ENCODE measurements at regions of chr9 and their contacts with region 1.

Region 1: DNA sequence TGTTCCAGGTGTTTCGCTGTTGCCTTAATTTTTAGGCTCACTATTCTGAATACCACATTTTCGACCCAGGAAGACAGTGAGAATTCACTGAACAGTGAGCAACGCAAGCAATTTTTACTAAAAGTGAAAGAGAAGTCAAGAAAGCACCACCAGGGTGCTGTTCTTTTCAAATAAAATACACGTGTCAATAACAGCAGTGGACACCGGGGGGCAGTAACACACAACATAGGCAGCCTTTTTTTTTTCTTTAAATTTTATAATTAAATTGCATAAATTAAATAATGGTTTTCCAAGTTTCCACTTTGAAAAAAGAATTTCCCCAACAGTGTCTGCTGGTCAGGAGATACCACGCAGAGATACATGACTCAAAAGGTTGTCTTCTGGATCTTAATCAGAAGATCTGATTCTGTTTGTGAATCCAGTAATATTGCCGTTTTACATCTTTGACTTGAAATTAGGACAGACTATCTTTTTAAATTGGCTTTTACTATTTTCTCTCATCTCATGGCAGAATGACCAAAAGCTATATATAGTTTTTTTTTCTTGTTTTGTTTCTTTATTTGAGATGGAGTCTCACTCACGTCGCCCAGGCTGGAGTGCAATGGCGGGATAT is 47.1 kb upstream of the SH3GL2 start:
- DNase-seq: peak; percentile 52
- ATAC-seq: peak; percentile 65
- H3K4me3 Mint-ChIP-seq: no peak overlapping the region
- H3K27ac Mint-ChIP-seq: no peak overlapping the region
- H3K4me1 Mint-ChIP-seq: peaks cover 7% of the 10 kb centered on the region
- H3K27me3 Mint-ChIP-seq: no peaks in the 10 kb centered on the region
- CTCF ChIP-seq: peak; percentile 78

Region 2: GRCh38 chr9:17802249-17802857 is 270.6 kb after region 1 on chr9:
- CTCF ChIA-PET with region 1: interaction called, 11 read pairs
- POLR2A ChIA-PET with region 1: no interaction called
- DNase-seq: no peak
- ATAC-seq: peak; percentile 46; the same call in 1 of the 2 replicates
- H3K4me3 Mint-ChIP-seq: no peak overlapping the region
- H3K27ac Mint-ChIP-seq: no peak overlapping the region
- H3K4me1 Mint-ChIP-seq: peaks cover 5% of the 10 kb centered on the region; the same call in 1 of the 2 replicates
- H3K27me3 Mint-ChIP-seq: no peaks in the 10 kb centered on the region
- CTCF ChIP-seq: no peak

Region 3: GRCh38 chr9:17847908-17848307 is 316.2 kb after region 1 on chr9:
- CTCF ChIA-PET with region 1: no interaction called
- POLR2A ChIA-PET with region 1: no interaction called
- DNase-seq: no peak
- ATAC-seq: no peak
- H3K4me3 Mint-ChIP-seq: no peak overlapping the region
- H3K27ac Mint-ChIP-seq: no peak overlapping the region
- H3K4me1 Mint-ChIP-seq: peaks cover 13% of the 10 kb centered on the region
- H3K27me3 Mint-ChIP-seq: peaks cover 3% of the 10 kb centered on the region
- CTCF ChIP-seq: no peak

Region 4: DNA sequence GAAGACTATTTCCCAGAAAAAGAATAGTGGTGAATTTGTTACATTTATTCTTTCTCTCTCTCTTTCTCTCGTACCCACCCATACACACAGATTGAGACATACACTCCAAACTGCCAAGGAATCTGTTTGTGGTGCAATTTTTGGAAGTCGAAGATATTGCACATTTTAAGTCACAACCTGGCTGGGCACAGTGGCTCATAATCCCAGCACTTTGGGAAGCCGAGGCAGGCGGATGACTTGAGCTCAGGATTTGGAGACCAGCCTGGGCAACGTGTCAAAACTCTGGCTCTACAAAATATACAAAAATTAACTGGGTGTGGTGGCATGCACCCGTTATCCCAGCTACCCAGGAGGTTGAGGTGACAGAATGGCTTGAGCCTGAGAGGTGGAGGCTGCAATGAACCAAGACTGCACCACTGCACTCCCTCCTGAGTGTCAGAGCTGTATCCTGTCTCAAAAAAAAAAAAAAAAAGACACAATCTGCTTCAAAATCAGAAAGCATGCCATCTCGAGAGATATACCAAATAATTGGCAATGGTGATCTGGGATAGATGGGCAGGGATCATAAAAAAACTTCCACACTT is 1614.8 kb after region 1 on chr9:
- CTCF ChIA-PET with region 1: no interaction called
- POLR2A ChIA-PET with region 1: interaction called, 10 read pairs
- DNase-seq: no peak
- ATAC-seq: no peak
- H3K4me3 Mint-ChIP-seq: no peak overlapping the region
- H3K27ac Mint-ChIP-seq: no peak overlapping the region
- H3K4me1 Mint-ChIP-seq: no peaks in the 10 kb centered on the region
- H3K27me3 Mint-ChIP-seq: no peaks in the 10 kb centered on the region
- CTCF ChIP-seq: no peak

Measured in WTC11 (cell line).